Cardiac septum (tissue), 1 donor: ENCODE measurements at regions of chr19 and their contacts with region 1.

Region 1: DNA sequence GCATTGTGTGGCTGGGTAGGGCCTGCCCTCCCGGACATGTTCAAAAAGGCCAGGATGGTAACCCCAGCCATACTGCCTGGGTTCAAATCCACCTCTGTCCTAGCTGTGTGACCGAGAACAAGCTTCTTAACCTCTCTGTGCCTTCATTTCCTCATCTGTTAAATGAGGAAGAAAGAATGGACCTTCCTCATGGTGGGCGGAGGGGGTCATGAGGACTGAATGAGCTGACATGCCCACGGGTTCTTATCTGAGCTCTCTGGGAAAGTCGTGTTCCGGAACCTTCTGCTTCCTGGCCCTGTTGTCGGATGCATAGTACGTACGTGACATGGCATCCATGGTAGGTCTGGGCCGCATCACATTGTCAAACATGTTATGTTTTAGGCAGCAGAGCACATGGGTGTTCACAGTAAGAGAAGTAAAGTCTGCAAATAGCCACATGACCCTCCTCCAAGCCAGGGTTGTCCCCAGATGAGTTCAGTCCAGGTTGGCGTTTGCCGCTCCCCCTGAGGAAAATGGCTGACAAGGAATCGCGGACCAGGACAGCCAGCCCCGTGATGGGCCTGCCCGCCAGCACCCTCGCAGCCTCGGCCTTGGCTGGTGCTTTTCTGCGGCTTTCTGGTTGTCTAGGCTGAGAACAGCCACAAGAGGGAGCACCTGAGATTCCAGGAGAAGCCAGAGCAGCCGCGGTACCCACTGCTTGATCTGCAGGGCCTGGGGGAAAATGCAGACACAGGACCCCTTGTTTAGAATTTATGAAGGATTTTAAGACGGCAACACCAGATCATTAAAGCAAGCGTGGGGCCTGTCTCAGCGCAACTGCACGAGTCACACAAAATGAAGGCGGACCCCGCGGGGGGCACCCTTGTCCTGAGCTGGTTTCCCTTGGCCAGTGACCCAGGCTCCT is 2.4 kb upstream of the NTN5 start:
- DNase-seq: peak; percentile 85

Region 2: GRCh38 chr19:48713864-48714758 is 38.9 kb after region 1 on chr19:
- intact Hi-C with region 1: loop called (anchors 5 kb)
- DNase-seq: peak; percentile 99

Region 3: GRCh38 chr19:48738557-48739399 is 63.6 kb after region 1 on chr19:
- intact Hi-C with region 1: loop called (anchors 2 kb)
- DNase-seq: peak; percentile 96